Activated CD4-positive, alpha-beta memory T cell treated with anti-CD3 and anti-CD28 coated beads, Interleukin-2, amount 10 ng/mL, durations not matched to agents 7 days and 5 days (primary cell): ENCODE measurements at regions of chr11 and their contacts with region 1.

Region 1: GRCh38 chr11:61041755-61042518 is 60.4 kb upstream of the CD5 start:
- DNase-seq: peak; percentile 93
- H3K4me3 Mint-ChIP-seq: peak overlapping the region; percentile 76
- H3K27ac Mint-ChIP-seq: peak overlapping the region; percentile 97
- H3K4me1 Mint-ChIP-seq: peaks cover 72% of the 10 kb centered on the region
- H3K27me3 Mint-ChIP-seq: no peaks in the 10 kb centered on the region

Region 2: GRCh38 chr11:60871378-60872061 is 170.4 kb before region 1 on chr11:
- CTCF ChIA-PET with region 1: no interaction called
- POLR2A ChIA-PET with region 1: no interaction called
- DNase-seq: peak; percentile 35
- H3K4me3 Mint-ChIP-seq: no peak overlapping the region
- H3K27ac Mint-ChIP-seq: peak overlapping the region; percentile 61
- H3K4me1 Mint-ChIP-seq: peaks cover 64% of the 10 kb centered on the region
- H3K27me3 Mint-ChIP-seq: no peaks in the 10 kb centered on the region

Region 3: DNA sequence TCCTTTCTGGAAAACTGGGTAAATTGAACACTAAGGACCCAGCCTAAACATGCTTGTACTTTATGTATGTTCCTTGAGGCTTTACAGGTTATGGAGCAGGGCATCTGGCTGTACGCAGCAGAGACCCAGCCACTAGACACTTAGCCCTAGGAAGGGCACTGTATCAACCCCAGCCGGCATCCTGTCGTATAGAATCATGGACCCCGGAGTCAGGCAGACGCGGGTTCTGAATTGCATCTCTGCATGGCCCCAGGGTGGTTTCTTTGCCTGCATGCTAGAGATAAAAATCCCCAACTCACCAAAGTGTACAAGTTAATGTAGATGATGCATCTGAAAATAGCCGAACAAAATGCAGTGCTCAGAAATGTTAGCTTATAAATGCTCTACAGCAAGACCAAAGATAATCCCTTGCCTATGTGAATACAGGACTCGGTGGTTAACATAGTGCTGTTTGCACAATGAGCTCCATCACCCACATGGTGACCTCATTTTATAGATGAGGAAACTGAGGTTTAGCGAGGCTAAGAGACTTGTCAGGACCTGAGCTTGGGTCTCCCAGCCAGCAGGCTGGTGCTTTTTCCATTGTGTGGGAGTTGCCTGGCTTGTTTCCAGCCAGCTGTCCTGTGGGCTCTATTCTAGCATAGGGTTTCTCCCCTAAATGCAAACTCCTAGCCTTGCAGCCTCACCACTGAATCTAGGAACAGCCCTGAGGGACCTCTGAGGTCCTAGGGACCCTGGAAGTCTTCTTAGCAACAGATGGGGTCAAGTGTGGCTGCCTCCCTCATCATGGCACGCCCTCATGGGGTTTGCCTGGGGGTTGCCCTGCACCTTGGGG is 63.2 kb before region 1 on chr11:
- CTCF ChIA-PET with region 1: interaction called, 9 read pairs
- POLR2A ChIA-PET with region 1: interaction called, 60 read pairs
- DNase-seq: peak; percentile 60
- H3K4me3 Mint-ChIP-seq: peak overlapping the region; percentile 69
- H3K27ac Mint-ChIP-seq: peak overlapping the region; percentile 99
- H3K4me1 Mint-ChIP-seq: peaks cover 84% of the 10 kb centered on the region
- H3K27me3 Mint-ChIP-seq: no peaks in the 10 kb centered on the region

Region 4: GRCh38 chr11:60992842-60993409 is 49.0 kb before region 1 on chr11:
- CTCF ChIA-PET with region 1: no interaction called
- POLR2A ChIA-PET with region 1: interaction called, 60 read pairs
- DNase-seq: no peak
- H3K4me3 Mint-ChIP-seq: peak overlapping the region; percentile 63
- H3K27ac Mint-ChIP-seq: peak overlapping the region; percentile 81
- H3K4me1 Mint-ChIP-seq: peaks cover 82% of the 10 kb centered on the region
- H3K27me3 Mint-ChIP-seq: no peaks in the 10 kb centered on the region

Region 5: DNA sequence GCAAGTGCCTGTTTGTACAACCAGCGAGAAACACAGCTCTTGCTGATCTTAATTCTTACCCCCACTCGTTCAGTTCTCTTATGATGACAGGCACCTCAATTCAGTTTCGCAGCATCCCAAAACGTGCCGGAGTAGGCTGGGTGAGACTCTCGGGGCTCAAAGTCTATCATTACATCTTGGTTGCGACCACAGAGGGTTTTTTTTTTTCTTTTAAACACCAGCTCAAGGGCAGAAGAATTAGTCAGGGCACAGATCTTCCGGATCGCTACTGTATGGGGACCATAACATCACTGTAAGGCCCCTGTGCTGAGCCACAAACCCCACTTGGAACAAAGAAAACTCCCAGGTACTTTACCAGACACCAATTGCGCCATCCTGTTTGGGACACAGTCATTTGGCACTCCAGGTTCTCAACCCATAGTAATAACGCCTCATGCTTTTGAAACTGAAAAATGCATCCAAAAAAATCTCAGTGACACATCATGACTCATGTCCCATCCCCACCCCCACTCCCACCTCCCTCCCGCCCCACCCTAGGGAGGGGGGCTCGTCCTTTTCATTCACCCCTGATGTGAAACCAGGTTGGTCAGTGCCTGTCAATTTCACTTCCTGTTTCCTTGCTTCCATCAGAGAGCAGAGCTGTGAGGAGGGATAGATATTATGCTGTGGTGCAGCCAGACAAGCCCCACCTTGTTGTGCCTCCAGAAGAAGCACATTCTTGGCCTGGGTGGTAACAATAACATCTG is 19.3 kb after region 1 on chr11:
- CTCF ChIA-PET with region 1: interaction called, 35 read pairs
- POLR2A ChIA-PET with region 1: interaction called, 139 read pairs
- DNase-seq: peak; percentile 87
- H3K4me3 Mint-ChIP-seq: peak overlapping the region; percentile 65
- H3K27ac Mint-ChIP-seq: peak overlapping the region; percentile 96
- H3K4me1 Mint-ChIP-seq: peaks cover 87% of the 10 kb centered on the region
- H3K27me3 Mint-ChIP-seq: no peaks in the 10 kb centered on the region

Region 6: DNA sequence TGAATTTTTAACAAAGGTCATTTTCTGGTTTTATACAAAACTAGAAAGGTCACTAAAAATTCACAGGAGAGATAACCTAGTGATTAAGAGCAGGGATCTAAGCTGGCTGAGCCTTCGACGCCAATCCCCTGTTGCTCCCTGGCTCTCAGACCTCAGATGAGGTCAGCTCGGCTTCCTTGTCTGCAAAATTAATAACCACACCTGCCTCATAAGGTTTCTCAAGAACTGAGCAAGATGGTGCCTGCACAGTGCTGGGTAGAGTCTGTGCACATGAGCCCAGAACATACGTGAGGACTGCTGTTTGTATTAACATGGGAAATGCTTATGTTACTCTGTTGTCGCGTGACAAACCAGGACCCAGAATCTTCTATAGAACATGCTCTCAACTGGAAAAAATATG is 36.0 kb after region 1 on chr11:
- CTCF ChIA-PET with region 1: interaction called, 53 read pairs
- POLR2A ChIA-PET with region 1: interaction called, 227 read pairs
- DNase-seq: peak; percentile 50
- H3K4me3 Mint-ChIP-seq: peak overlapping the region; percentile 82
- H3K27ac Mint-ChIP-seq: peak overlapping the region; percentile 96
- H3K4me1 Mint-ChIP-seq: peaks cover 92% of the 10 kb centered on the region
- H3K27me3 Mint-ChIP-seq: no peaks in the 10 kb centered on the region

Region 7: GRCh38 chr11:61091373-61092279 is 49.7 kb after region 1 on chr11:
- CTCF ChIA-PET with region 1: interaction called, 3 read pairs
- POLR2A ChIA-PET with region 1: interaction called, 45 read pairs
- DNase-seq: peak; percentile 54
- H3K4me3 Mint-ChIP-seq: peak overlapping the region; percentile 77
- H3K27ac Mint-ChIP-seq: peak overlapping the region; percentile 96
- H3K4me1 Mint-ChIP-seq: peaks cover 69% of the 10 kb centered on the region
- H3K27me3 Mint-ChIP-seq: no peaks in the 10 kb centered on the region

Region 8: DNA sequence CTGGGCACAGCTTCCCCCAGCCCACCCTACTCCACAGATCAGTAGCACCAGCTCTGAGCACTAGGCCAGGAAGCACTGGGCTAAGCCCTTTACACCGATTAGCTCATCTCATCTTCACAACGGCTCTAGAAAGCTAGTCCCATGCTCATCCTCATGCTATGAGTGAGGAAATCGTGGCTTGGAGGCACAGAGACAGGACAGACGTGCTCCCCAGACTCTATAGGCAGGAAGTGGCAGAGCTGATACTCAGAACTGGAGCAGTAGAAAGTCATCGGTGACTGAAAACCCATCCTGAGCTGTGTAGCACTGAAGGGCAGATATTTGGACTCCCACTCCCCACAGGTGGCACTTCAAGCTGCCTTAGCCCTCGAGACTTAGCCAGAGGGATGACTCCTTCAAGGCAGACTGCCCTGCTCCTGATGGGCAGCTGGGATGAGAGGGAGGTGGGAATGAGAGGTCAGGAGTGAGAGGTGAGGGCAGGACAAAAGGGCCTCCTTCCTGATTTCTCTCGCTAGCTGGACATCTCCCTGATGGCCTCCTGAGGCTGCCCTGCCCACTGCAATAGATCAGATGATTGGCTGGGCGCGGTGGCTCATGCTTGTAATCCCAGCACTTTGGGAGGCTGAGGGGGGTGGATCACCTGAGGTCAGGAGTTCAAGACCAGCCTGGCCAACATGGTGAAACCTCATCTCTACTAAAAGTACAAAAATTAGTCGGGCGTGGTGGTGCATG is 70.0 kb after region 1 on chr11:
- CTCF ChIA-PET with region 1: interaction called, 15 read pairs
- POLR2A ChIA-PET with region 1: interaction called, 57 read pairs
- DNase-seq: peak; percentile 84
- H3K4me3 Mint-ChIP-seq: no peak overlapping the region
- H3K27ac Mint-ChIP-seq: peak overlapping the region; percentile 96
- H3K4me1 Mint-ChIP-seq: peaks cover 98% of the 10 kb centered on the region
- H3K27me3 Mint-ChIP-seq: no peaks in the 10 kb centered on the region